ENCODE measurements at regions of chr21 and their contacts with region 1.

Region 1: DNA sequence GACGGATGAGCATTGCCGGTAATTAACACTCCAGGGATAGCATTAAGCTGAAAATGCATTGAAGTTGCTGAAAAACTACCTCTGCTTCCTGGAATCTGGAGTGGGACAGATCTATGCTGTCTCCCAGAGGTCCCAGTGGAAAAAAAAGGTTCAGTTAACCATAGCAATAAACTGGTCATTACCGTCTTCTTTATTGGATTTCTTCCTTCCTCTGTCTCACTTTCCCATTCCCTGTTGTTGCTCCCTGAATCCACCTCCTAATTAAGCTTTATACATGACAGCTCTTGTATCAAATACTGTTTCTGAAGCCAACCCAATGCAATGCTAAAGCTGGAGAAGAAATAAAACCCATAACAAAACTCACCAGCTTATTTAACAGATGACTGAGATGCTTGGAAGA is 1805.9 kb downstream of the NCAM2 start:
- DNase-seq: no peak
- ATAC-seq: no peak
- H3K4me3 ChIP-seq: no peak overlapping the region
- H3K4me3 Mint-ChIP-seq: no peak overlapping the region
- H3K27ac ChIP-seq: no peak overlapping the region
- H3K27ac Mint-ChIP-seq: no peak overlapping the region
- H3K4me1 ChIP-seq: no peaks in the 10 kb centered on the region
- H3K4me1 Mint-ChIP-seq: no peaks in the 10 kb centered on the region
- H3K27me3 ChIP-seq: no peaks in the 10 kb centered on the region
- H3K27me3 Mint-ChIP-seq: no peaks in the 10 kb centered on the region
- CTCF ChIP-seq: no peak

Region 2: DNA sequence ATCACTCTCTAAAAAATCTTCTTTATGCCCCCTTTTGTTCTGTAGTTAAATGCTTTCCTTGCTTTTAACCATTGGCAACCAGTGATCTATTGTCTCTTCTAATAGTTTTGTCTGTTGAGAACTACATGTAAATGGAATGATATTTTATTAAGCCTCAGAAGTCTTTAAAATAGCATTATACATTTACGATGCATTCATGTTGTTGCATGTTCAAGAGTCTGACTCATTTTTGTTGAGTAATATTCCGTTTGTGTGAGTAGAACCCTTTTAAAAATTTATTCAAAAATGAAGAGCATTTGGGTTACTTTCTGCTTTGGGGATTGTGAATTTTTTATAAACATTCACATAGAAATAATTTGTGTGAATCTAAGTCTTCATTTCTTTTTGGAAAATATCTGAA is 453.1 kb before region 1 on chr21:
- CTCF ChIA-PET with region 1: no interaction called
- POLR2A ChIA-PET with region 1: no interaction called
- intact Hi-C with region 1: loop called in 1 of 2 experiments (anchors 2 kb)
- DNase-seq: no peak
- ATAC-seq: no peak
- H3K4me3 ChIP-seq: no peak overlapping the region
- H3K4me3 Mint-ChIP-seq: no peak overlapping the region
- H3K27ac ChIP-seq: no peak overlapping the region
- H3K27ac Mint-ChIP-seq: no peak overlapping the region
- H3K4me1 ChIP-seq: no peaks in the 10 kb centered on the region
- H3K4me1 Mint-ChIP-seq: no peaks in the 10 kb centered on the region
- H3K27me3 ChIP-seq: no peaks in the 10 kb centered on the region
- H3K27me3 Mint-ChIP-seq: no peaks in the 10 kb centered on the region
- CTCF ChIP-seq: no peak

Region 3: DNA sequence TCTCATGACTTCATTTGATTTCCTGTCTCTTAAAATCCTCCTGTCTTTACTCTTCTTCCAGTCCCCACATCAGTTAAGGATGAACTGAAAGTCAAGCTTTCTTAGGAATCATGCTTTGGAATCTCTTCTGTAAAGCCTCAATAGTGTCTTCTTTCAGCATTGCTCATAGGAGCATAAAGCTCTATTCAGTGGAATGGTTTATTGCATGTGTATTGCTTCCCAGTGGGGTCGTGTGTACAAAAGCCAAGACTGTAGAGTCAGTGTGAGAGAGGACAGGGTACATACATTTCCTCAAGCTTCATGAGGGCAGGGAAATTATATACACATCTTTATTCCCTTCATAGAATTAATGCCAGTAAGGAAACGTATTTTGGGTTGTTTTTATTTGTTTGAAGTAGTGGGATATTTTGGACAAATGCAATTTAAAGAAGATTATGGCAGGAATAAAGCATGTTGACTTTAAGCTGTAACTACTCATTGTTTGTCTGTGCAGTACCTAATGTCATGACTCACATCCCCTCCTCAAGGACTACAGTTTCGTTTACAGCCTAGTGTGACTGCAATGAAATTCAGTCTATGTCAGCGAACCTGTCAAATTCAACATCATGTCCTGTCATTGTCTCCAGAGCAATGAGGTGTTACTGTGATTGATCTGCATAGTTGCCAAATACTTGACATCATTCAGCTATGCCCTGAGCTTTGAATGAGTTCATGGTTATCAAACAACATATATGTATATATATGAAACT is 358.2 kb after region 1 on chr21:
- CTCF ChIA-PET with region 1: no interaction called
- POLR2A ChIA-PET with region 1: no interaction called
- intact Hi-C with region 1: no loop called
- DNase-seq: no peak
- ATAC-seq: no peak
- H3K4me3 ChIP-seq: no peak overlapping the region
- H3K4me3 Mint-ChIP-seq: no peak overlapping the region
- H3K27ac ChIP-seq: no peak overlapping the region
- H3K27ac Mint-ChIP-seq: no peak overlapping the region
- H3K4me1 ChIP-seq: no peaks in the 10 kb centered on the region
- H3K4me1 Mint-ChIP-seq: no peaks in the 10 kb centered on the region
- H3K27me3 ChIP-seq: no peaks in the 10 kb centered on the region
- H3K27me3 Mint-ChIP-seq: no peaks in the 10 kb centered on the region
- CTCF ChIP-seq: no peak

Measured in CD8-positive, alpha-beta T cell (primary cell).